Activated CD4-positive, alpha-beta T cell treated with anti-CD3 and anti-CD28 coated beads, Interleukin-2, amount 10 ng/mL, durations not matched to agents 24 days and 14 days (primary cell): ENCODE measurements at regions of chrX and their contacts with region 1.

Region 1: DNA sequence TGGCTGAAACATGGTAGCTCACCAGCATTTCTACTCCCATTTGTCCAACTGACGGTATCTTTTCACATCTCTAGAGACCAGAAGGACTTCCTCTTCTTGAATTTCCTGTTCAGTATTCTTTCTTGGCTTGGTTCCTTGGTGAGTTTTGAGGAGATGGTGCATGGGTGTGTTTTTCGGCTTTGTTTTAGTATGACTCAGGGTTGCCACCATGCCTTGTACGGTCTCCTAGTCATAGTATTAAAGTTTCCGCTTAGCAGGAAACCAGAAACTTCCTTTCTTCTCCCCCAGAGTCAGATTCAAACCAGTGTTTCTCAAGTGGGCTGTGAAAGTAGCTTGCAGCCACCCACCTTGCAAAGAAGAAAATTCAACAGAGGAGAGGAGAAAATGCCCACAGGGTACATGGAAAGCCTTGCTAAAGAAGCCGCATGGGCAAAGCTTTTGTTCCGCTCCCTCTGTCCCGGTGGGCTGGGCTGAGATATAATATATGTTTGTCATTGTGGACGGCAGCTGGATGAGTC is 5.7 kb downstream of the CD99 start:
- DNase-seq: peak; percentile 89
- H3K4me3 Mint-ChIP-seq: peak overlapping the region; percentile 95
- H3K27ac Mint-ChIP-seq: peak overlapping the region; percentile 98
- H3K4me1 Mint-ChIP-seq: peaks cover 84% of the 10 kb centered on the region
- H3K27me3 Mint-ChIP-seq: no peaks in the 10 kb centered on the region

Region 2: GRCh38 chrX:1528186-1528883 is 1168.4 kb before region 1 on chrX:
- intact Hi-C with region 1: loop called (anchors 2 kb)
- DNase-seq: peak; percentile 55
- H3K4me3 Mint-ChIP-seq: no peak overlapping the region
- H3K27ac Mint-ChIP-seq: no peak overlapping the region
- H3K4me1 Mint-ChIP-seq: peaks cover under 1% of the 10 kb centered on the region
- H3K27me3 Mint-ChIP-seq: no peaks in the 10 kb centered on the region

Region 3: GRCh38 chrX:2647627-2648026 is 49.1 kb before region 1 on chrX:
- intact Hi-C with region 1: loop called (anchors 1 kb)
- DNase-seq: no peak
- H3K4me3 Mint-ChIP-seq: peak overlapping the region; percentile 18
- H3K27ac Mint-ChIP-seq: peak overlapping the region; percentile 83
- H3K4me1 Mint-ChIP-seq: peaks cover 25% of the 10 kb centered on the region
- H3K27me3 Mint-ChIP-seq: no peaks in the 10 kb centered on the region

Region 4: DNA sequence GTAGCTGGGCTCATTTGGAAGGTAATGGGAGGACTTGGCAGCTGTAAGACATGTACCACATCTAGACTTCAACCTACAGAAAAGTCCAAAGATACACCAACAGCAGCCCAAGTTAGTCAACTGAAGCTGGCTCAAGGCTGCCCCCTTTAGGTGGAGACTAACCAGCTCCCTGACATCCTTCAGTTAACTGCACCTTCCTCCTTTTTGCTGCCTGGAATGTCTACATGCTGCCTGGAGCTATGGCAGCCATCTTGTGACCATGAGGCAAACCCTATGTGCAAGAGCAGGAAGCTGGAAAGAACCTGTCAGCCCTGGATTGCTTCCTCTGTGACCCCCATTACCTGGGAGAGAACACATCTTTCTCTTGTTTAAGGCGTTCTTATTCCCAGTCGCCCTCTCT is 206.6 kb after region 1 on chrX:
- intact Hi-C with region 1: no loop called
- DNase-seq: no peak
- H3K4me3 Mint-ChIP-seq: no peak overlapping the region
- H3K27ac Mint-ChIP-seq: no peak overlapping the region
- H3K4me1 Mint-ChIP-seq: no peaks in the 10 kb centered on the region
- H3K27me3 Mint-ChIP-seq: no peaks in the 10 kb centered on the region